ENCODE measurements at regions of chr2 and their contacts with region 1.

Region 1: GRCh38 chr2:36461039-36461681 is 105.6 kb downstream of the CRIM1 start:
- DNase-seq: no peak
- H3K4me3 ChIP-seq: no peak overlapping the region
- H3K4me3 Mint-ChIP-seq: no peak overlapping the region
- H3K27ac Mint-ChIP-seq: no peak overlapping the region
- H3K4me1 ChIP-seq: peaks cover 59% of the 10 kb centered on the region
- H3K4me1 Mint-ChIP-seq: peaks cover 13% of the 10 kb centered on the region
- H3K27me3 ChIP-seq: no peaks in the 10 kb centered on the region
- H3K27me3 Mint-ChIP-seq: no peaks in the 10 kb centered on the region
- CTCF ChIP-seq: no peak

Region 2: GRCh38 chr2:36355151-36355889 is 105.8 kb before region 1 on chr2 and contains the start of gene CRIM1:
- CTCF ChIA-PET with region 1: interaction called, 32 read pairs
- POLR2A ChIA-PET with region 1: no interaction called
- intact Hi-C with region 1: loop called (anchors 1 kb)
- DNase-seq: peak; percentile 89 to 91
- H3K4me3 ChIP-seq: peak within 1 kb of the TSS; percentile 97
- H3K4me3 Mint-ChIP-seq: peak within 1 kb of the TSS; percentile 97
- H3K27ac Mint-ChIP-seq: peak within 1 kb of the TSS; percentile 93
- H3K4me1 ChIP-seq: peaks cover 48% of the 10 kb centered on the region
- H3K4me1 Mint-ChIP-seq: peaks cover 56% of the 10 kb centered on the region
- H3K27me3 ChIP-seq: no peaks in the 10 kb centered on the region
- H3K27me3 Mint-ChIP-seq: no peaks in the 10 kb centered on the region
- CTCF ChIP-seq: no peak
- total RNA-seq, gene CRIM1: 270 and 292 TPM in 2 replicates

Region 3: GRCh38 chr2:36416370-36417165 is 44.6 kb before region 1 on chr2:
- CTCF ChIA-PET with region 1: interaction called, 21 read pairs
- POLR2A ChIA-PET with region 1: no interaction called
- intact Hi-C with region 1: no loop called
- DNase-seq: no peak
- H3K4me3 ChIP-seq: no peak overlapping the region
- H3K4me3 Mint-ChIP-seq: no peak overlapping the region
- H3K27ac Mint-ChIP-seq: peak overlapping the region; percentile 9
- H3K4me1 ChIP-seq: peaks cover 39% of the 10 kb centered on the region
- H3K4me1 Mint-ChIP-seq: peaks cover 65% of the 10 kb centered on the region
- H3K27me3 ChIP-seq: no peaks in the 10 kb centered on the region
- H3K27me3 Mint-ChIP-seq: no peaks in the 10 kb centered on the region
- CTCF ChIP-seq: no peak

Region 4: DNA sequence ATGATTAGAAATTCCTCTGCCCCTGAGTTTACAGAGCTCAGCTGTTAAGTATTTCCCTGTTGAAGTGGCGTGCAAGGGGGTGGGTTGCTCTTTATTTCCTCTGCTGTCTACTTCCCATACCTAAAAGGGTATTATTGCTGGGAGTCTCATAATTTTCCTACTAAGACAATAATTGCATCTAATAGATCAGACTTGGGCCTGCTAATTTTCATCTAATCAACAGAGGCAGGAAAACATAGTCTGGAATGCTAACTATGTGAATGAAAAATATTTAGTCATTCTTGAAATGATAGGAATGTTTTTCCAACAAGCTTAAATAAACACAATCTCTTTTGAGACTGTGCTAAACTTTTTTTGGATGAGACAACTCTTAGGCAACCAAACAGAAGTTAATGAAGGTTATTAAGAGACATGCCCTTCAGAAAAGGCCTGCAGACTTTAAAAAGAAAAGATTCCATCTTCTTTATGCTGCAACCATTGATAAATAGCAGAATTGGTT is 25.4 kb after region 1 on chr2:
- CTCF ChIA-PET with region 1: interaction called, 10 read pairs
- POLR2A ChIA-PET with region 1: interaction called, 3 read pairs
- intact Hi-C with region 1: no loop called
- DNase-seq: no peak
- H3K4me3 ChIP-seq: no peak overlapping the region
- H3K4me3 Mint-ChIP-seq: peak overlapping the region; percentile 33
- H3K27ac Mint-ChIP-seq: peak overlapping the region; percentile 91
- H3K4me1 ChIP-seq: peaks cover 100% of the 10 kb centered on the region
- H3K4me1 Mint-ChIP-seq: peaks cover 79% of the 10 kb centered on the region
- H3K27me3 ChIP-seq: no peaks in the 10 kb centered on the region
- H3K27me3 Mint-ChIP-seq: no peaks in the 10 kb centered on the region
- CTCF ChIP-seq: no peak

Region 5: GRCh38 chr2:36507408-36507812 is 46.2 kb after region 1 on chr2:
- CTCF ChIA-PET with region 1: interaction called, 7 read pairs
- POLR2A ChIA-PET with region 1: no interaction called
- intact Hi-C with region 1: loop called (anchors 1 kb)
- DNase-seq: peak; percentile 70 to 79
- H3K4me3 ChIP-seq: no peak overlapping the region
- H3K4me3 Mint-ChIP-seq: no peak overlapping the region
- H3K27ac Mint-ChIP-seq: peak overlapping the region; percentile 79
- H3K4me1 ChIP-seq: peaks cover 33% of the 10 kb centered on the region
- H3K4me1 Mint-ChIP-seq: peaks cover 34% of the 10 kb centered on the region
- H3K27me3 ChIP-seq: no peaks in the 10 kb centered on the region
- H3K27me3 Mint-ChIP-seq: no peaks in the 10 kb centered on the region
- CTCF ChIP-seq: peak; percentile 56 to 89

Region 6: GRCh38 chr2:36530983-36531354 is 69.8 kb after region 1 on chr2:
- CTCF ChIA-PET with region 1: no interaction called
- POLR2A ChIA-PET with region 1: no interaction called
- intact Hi-C with region 1: no loop called
- DNase-seq: no peak
- H3K4me3 ChIP-seq: no peak overlapping the region
- H3K4me3 Mint-ChIP-seq: no peak overlapping the region
- H3K27ac Mint-ChIP-seq: peak overlapping the region; percentile 17
- H3K4me1 ChIP-seq: no peaks in the 10 kb centered on the region
- H3K4me1 Mint-ChIP-seq: peaks cover 5% of the 10 kb centered on the region
- H3K27me3 ChIP-seq: no peaks in the 10 kb centered on the region
- H3K27me3 Mint-ChIP-seq: no peaks in the 10 kb centered on the region
- CTCF ChIP-seq: no peak

Region 7: DNA sequence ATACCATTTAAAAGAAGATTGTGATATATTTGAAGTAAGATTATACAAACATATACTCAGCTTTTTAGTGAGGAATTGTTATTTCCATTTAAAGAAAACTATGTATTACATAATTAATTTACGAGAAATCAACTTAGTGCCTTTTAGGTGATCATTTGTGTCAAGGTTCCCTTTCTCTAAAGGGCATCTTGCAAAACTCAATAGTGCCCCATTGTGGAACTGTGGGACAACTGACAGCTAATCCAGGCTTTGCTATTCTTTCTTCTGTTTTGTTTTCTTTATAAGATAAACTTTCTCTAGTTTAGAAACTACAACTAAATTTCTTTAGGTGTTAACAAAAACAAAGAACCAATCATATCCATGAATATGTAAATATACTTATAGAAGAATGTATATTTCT is 211.0 kb after region 1 on chr2:
- CTCF ChIA-PET with region 1: no interaction called
- POLR2A ChIA-PET with region 1: no interaction called
- intact Hi-C with region 1: loop called (anchors 5 kb)
- DNase-seq: peak in 1 of 2 experiments; percentile 48
- H3K4me3 ChIP-seq: no peak overlapping the region
- H3K4me3 Mint-ChIP-seq: no peak overlapping the region
- H3K27ac Mint-ChIP-seq: no peak overlapping the region
- H3K4me1 ChIP-seq: peaks cover 4% of the 10 kb centered on the region; the same call in 1 of the 2 replicates
- H3K4me1 Mint-ChIP-seq: peaks cover 30% of the 10 kb centered on the region
- H3K27me3 ChIP-seq: no peaks in the 10 kb centered on the region; the same call in 1 of the 2 replicates
- H3K27me3 Mint-ChIP-seq: no peaks in the 10 kb centered on the region
- CTCF ChIP-seq: peak; percentile 58 to 70